Activated CD4-positive, alpha-beta T cell treated with anti-CD3 and anti-CD28 coated beads for 36 hours (primary cell): ENCODE measurements at regions of chr5 and their contacts with region 1.

Region 1: DNA sequence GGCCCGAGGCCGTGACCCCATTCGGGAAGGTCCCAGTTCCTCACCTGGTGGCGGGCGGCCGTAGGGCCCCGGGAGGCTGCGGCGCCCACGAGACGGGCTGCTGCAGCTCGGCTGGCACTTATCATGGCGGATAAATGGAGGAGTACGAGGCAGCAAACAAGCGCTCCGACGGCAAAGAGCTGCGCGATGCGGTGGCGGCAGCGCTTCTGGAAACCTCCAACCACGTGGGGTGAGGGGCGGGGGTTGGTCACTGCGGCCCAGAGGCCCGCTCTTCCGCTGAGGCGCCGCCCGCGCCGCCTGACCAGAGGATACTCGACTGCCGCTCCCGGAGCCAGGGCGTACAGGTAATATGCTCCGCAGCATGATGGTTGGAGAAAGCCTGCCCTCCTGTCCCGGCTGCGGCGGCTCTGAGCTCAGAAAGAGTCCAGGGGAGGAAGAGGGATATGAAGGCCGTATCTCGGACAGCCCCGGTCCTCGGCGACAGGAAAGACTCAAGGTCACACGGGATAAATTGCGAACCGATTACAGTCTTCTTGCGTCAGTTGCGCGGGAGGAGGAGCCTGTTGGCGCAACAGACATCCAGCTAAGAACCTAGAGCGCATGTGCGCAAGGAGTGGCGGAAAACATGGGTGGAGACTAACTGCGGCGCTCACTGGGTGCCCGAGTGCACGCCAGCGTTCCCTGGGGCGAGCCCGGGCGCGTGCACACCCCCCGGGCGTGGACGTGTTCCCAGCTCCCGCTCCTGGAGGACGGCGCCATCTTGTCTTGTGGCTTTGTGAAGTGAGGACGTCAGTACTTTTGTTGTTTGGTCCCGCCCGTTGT is at the start of gene HSPA9:
- DNase-seq: peak; percentile 98
- ATAC-seq: peak; percentile 89
- H3K4me3 Mint-ChIP-seq: peak within 1 kb of the TSS; percentile 96
- H3K27ac Mint-ChIP-seq: peak within 1 kb of the TSS; percentile 99
- H3K4me1 Mint-ChIP-seq: peaks cover 43% of the 10 kb centered on the region
- H3K27me3 Mint-ChIP-seq: no peaks in the 10 kb centered on the region
- total RNA-seq, gene HSPA9: 431 to 466 TPM

Region 2: GRCh38 chr5:138178516-138179276 is 396.7 kb before region 1 on chr5 and contains the starts of genes BRD8 and KIF20A:
- CTCF ChIA-PET with region 1: no interaction called
- POLR2A ChIA-PET with region 1: no interaction called
- intact Hi-C with region 1: loop called in 1 of 2 experiments (anchors 1 kb)
- DNase-seq: peak; percentile 96
- ATAC-seq: peak; percentile 93
- H3K4me3 Mint-ChIP-seq: no peak within 1 kb of the TSS
- H3K27ac Mint-ChIP-seq: peak within 1 kb of the TSS; percentile 73
- H3K4me1 Mint-ChIP-seq: peaks cover 16% of the 10 kb centered on the region
- H3K27me3 Mint-ChIP-seq: no peaks in the 10 kb centered on the region
- total RNA-seq, gene BRD8: 60.7 to 61.4 TPM
- total RNA-seq, gene KIF20A: 66.6 to 76.3 TPM

Region 3: GRCh38 chr5:138352071-138352721 is 223.2 kb before region 1 on chr5 and contains the start of gene KDM3B:
- CTCF ChIA-PET with region 1: no interaction called
- POLR2A ChIA-PET with region 1: no interaction called
- intact Hi-C with region 1: loop called in 1 of 2 experiments (anchors 2 kb)
- DNase-seq: peak; percentile 94
- ATAC-seq: peak; percentile 76
- H3K4me3 Mint-ChIP-seq: peak within 1 kb of the TSS; percentile 99
- H3K27ac Mint-ChIP-seq: peak within 1 kb of the TSS; percentile 96
- H3K4me1 Mint-ChIP-seq: peaks cover 44% of the 10 kb centered on the region
- H3K27me3 Mint-ChIP-seq: no peaks in the 10 kb centered on the region
- total RNA-seq, gene KDM3B: 39.0 to 40.9 TPM

Region 4: GRCh38 chr5:138408023-138408422 is 167.4 kb before region 1 on chr5:
- CTCF ChIA-PET with region 1: no interaction called
- POLR2A ChIA-PET with region 1: no interaction called
- intact Hi-C with region 1: no loop called
- DNase-seq: peak; percentile 68
- ATAC-seq: peak; percentile 94
- H3K4me3 Mint-ChIP-seq: no peak overlapping the region
- H3K27ac Mint-ChIP-seq: peak overlapping the region; percentile 60
- H3K4me1 Mint-ChIP-seq: peaks cover 13% of the 10 kb centered on the region
- H3K27me3 Mint-ChIP-seq: no peaks in the 10 kb centered on the region

Region 5: GRCh38 chr5:138542956-138543729 is 32.3 kb before region 1 on chr5 and contains the start of gene ETF1:
- CTCF ChIA-PET with region 1: interaction called, 10 read pairs
- POLR2A ChIA-PET with region 1: interaction called, 33 read pairs
- intact Hi-C with region 1: loop called (anchors 1 kb)
- DNase-seq: peak; percentile 100
- ATAC-seq: peak; percentile 94
- H3K4me3 Mint-ChIP-seq: peak within 1 kb of the TSS; percentile 100
- H3K27ac Mint-ChIP-seq: peak within 1 kb of the TSS; percentile 100
- H3K4me1 Mint-ChIP-seq: peaks cover 67% of the 10 kb centered on the region
- H3K27me3 Mint-ChIP-seq: no peaks in the 10 kb centered on the region
- total RNA-seq, gene ETF1: 140 to 156 TPM

Region 6: DNA sequence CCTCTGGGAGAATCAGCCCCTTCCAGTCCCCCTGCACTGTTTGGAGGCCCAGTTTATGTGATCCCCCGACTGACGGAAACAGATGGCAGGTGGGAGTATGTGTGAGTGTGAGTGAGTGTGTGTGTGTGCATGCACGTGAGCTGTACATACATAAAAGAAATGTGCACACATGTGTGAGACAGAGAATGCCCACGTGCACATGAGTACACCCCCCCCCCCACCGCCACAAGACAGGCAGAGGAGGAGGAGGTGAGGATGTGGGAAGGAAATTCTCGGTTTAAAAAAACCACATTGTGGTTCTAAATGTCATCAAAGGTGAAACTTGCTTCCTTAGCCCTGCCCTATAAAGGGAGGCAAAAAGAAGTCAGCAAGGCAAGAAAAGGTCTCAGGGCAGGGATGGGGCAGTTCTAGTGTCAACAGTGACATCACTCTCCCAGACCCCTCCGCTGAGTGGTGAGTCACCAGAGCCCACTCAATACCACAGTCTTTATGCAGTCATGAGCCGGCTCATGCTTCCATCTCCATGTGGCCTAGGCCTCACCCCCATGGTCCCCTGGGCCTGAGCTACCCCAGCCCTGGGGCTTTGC is 79.0 kb after region 1 on chr5:
- CTCF ChIA-PET with region 1: interaction called, 7 read pairs
- POLR2A ChIA-PET with region 1: no interaction called
- intact Hi-C with region 1: loop called in 1 of 2 experiments (anchors 1 kb)
- DNase-seq: peak; percentile 81
- ATAC-seq: peak; percentile 97
- H3K4me3 Mint-ChIP-seq: no peak overlapping the region
- H3K27ac Mint-ChIP-seq: peak overlapping the region; percentile 28
- H3K4me1 Mint-ChIP-seq: peaks cover 24% of the 10 kb centered on the region
- H3K27me3 Mint-ChIP-seq: peaks cover 72% of the 10 kb centered on the region

Region 7: GRCh38 chr5:139262742-139263445 is 687.5 kb after region 1 on chr5:
- CTCF ChIA-PET with region 1: interaction called, 7 read pairs
- POLR2A ChIA-PET with region 1: no interaction called
- intact Hi-C with region 1: loop called (anchors 1 to 2 kb)
- DNase-seq: peak; percentile 87
- ATAC-seq: peak; percentile 100
- H3K4me3 Mint-ChIP-seq: no peak overlapping the region
- H3K27ac Mint-ChIP-seq: no peak overlapping the region
- H3K4me1 Mint-ChIP-seq: peaks cover 4% of the 10 kb centered on the region
- H3K27me3 Mint-ChIP-seq: peaks cover 3% of the 10 kb centered on the region

Region 8: GRCh38 chr5:139341650-139342422 is 766.4 kb after region 1 on chr5 and contains the start of gene PAIP2:
- CTCF ChIA-PET with region 1: no interaction called
- POLR2A ChIA-PET with region 1: no interaction called
- intact Hi-C with region 1: loop called in 1 of 2 experiments (anchors 1 kb)
- DNase-seq: peak; percentile 99
- ATAC-seq: peak; percentile 88
- H3K4me3 Mint-ChIP-seq: peak within 1 kb of the TSS; percentile 88
- H3K27ac Mint-ChIP-seq: peak within 1 kb of the TSS; percentile 94
- H3K4me1 Mint-ChIP-seq: peaks cover 53% of the 10 kb centered on the region
- H3K27me3 Mint-ChIP-seq: no peaks in the 10 kb centered on the region
- total RNA-seq, gene PAIP2: 101 to 126 TPM